CD8-positive, alpha-beta memory T cell (primary cell): ENCODE measurements at regions of chr6 and their contacts with region 1.

Region 1: GRCh38 chr6:44221291-44221960 is 2.0 kb upstream of the SLC29A1 start:
- DNase-seq: peak; percentile 62 to 84 (median 66)
- H3K4me3 ChIP-seq: no peak overlapping the region
- H3K4me3 Mint-ChIP-seq: peak overlapping the region in 4 of 7 donors; percentile 20 to 62 (median 38)
- H3K27ac ChIP-seq: peak overlapping the region; percentile 20
- H3K27ac Mint-ChIP-seq: peak overlapping the region in 5 of 8 donors; percentile 45 to 82 (median 71)
- H3K4me1 ChIP-seq: peaks cover 10% of the 10 kb centered on the region
- H3K4me1 Mint-ChIP-seq: peaks cover 16 to 27% (median 17%) of the 10 kb centered on the region in 3 donors
- H3K27me3 ChIP-seq: peaks cover 5% of the 10 kb centered on the region
- H3K27me3 Mint-ChIP-seq: peaks cover 10 to 11% of the 10 kb centered on the region in 2 donors

Region 2: DNA sequence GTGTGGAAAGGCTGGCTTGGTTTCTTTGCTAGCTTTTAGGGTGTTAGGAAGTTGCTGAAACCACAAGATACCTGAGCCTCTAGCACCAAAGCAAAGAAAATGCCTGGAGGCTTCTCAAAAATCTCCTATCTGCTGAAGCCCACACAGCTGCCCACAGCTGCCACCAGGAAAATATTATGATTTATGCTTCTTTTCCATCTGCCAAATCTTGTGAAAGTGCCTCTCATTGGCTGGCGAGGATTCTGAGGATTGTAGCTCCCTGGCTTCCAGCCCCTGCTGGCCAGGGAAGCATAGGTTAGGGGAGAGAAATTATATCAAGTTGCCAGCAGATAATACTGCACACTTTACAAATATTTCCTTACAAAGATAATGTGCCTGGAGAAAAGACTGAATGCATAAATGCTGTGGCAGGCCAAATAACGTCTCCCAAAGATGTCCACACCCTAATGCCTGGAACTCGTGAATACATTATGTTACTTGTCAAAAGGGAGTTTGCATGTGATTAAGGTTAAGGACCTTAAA is 192.6 kb before region 1 on chr6:
- CTCF ChIA-PET with region 1: no interaction called
- POLR2A ChIA-PET with region 1: no interaction called
- DNase-seq: no peak
- H3K4me3 ChIP-seq: no peak overlapping the region
- H3K4me3 Mint-ChIP-seq: no peak overlapping the region
- H3K27ac ChIP-seq: no peak overlapping the region
- H3K27ac Mint-ChIP-seq: no peak overlapping the region
- H3K4me1 ChIP-seq: no peaks in the 10 kb centered on the region
- H3K4me1 Mint-ChIP-seq: no peaks in the 10 kb centered on the region
- H3K27me3 ChIP-seq: no peaks in the 10 kb centered on the region
- H3K27me3 Mint-ChIP-seq: peaks cover 5 to 44% of the 10 kb centered on the region in 2 donors

Region 3: DNA sequence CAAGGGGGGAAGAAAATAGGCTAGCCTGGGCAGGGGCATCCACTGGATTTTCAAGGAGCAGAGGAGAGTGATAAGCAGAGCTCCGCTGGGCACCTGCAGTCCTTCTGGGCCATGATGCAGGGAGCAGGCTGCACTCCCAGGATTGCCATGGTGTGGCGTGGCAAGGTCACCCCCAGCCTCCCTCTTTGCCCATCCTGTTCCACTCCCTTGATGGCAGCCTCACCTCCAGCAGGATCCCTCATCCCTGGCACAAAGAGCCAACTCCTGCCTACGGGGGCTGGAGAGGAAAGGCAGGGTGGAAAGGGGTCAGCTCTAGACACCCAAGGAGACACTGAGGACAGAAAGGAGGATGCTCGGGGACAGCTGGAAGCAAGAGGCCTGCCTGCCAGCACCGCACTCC is 27.1 kb before region 1 on chr6:
- CTCF ChIA-PET with region 1: no interaction called
- POLR2A ChIA-PET with region 1: no interaction called
- DNase-seq: no peak
- H3K4me3 ChIP-seq: no peak overlapping the region
- H3K4me3 Mint-ChIP-seq: no peak overlapping the region
- H3K27ac ChIP-seq: no peak overlapping the region
- H3K27ac Mint-ChIP-seq: no peak overlapping the region
- H3K4me1 ChIP-seq: no peaks in the 10 kb centered on the region
- H3K4me1 Mint-ChIP-seq: no peaks in the 10 kb centered on the region
- H3K27me3 ChIP-seq: no peaks in the 10 kb centered on the region
- H3K27me3 Mint-ChIP-seq: peaks cover 13 to 23% of the 10 kb centered on the region in 2 donors

Region 4: DNA sequence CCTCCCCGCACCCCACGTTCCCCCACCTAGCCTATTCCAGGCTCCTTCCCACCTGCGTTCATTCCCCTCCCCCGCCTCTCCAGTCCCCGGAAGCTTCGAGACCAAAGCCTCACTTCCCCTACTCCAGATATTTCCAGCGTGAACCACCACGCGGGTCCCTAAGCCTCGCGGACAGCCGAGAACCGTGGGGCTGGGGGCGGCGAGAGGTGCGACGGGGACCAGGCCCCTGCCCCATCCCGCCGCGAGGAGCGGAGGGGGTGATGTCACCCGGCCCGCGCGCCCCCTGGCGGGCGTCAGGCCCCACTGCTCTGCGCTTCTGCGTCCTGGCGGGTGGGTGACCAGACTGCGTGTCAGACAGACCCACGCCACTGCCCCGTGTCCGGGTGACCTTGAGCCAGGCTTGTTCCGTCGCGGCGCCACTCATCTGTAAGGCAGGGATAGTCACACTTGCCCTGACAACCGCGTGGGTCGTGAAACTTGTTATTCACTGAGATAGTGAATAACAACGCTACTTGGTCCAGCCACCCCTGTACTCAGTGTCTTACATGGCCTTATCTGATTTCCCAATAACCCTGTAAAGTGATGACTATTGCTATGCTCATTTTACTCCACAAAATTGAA is 16.5 kb after region 1 on chr6:
- CTCF ChIA-PET with region 1: interaction called, 69 read pairs
- POLR2A ChIA-PET with region 1: interaction called, 3 read pairs
- DNase-seq: peak; percentile 70 to 85 (median 76)
- H3K4me3 ChIP-seq: peak overlapping the region; percentile 77
- H3K4me3 Mint-ChIP-seq: peak overlapping the region; percentile 84 to 95 (median 89)
- H3K27ac ChIP-seq: peak overlapping the region; percentile 87
- H3K27ac Mint-ChIP-seq: peak overlapping the region; percentile 63 to 98 (median 96)
- H3K4me1 ChIP-seq: peaks cover 12% of the 10 kb centered on the region
- H3K4me1 Mint-ChIP-seq: peaks cover 10 to 15% (median 10%) of the 10 kb centered on the region in 3 donors
- H3K27me3 ChIP-seq: no peaks in the 10 kb centered on the region
- H3K27me3 Mint-ChIP-seq: peaks cover 0 to 2% of the 10 kb centered on the region in 2 donors

Region 5: DNA sequence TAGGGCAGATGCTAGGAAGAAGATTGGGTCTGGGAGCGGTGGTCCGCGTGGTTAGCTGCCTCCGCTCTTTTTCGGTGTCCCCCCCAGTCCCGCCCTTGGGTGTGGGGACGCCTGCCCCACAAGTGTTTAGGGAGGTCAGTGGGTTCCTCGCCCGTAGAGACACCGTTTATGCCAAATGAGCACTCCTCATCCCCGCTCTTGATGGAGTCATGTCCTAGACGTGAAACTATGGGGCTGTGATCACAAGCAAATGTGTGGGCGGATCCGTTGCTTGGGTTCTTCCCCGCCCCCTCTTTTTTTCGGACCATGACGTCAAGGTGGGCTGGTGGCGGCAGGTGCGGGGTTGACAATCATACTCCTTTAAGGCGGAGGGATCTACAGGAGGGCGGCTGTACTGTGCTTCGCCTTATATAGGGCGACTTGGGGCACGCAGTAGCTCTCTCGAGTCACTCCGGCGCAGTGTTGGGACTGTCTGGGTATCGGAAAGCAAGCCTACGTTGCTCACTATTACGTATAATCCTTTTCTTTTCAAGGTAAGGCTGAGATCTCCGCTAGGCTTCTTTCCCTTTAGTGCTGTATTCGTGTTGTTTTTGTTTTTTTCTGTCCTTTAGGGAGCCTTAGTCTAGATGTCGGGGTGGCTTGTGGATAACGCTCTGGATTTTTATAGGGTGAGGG is 25.4 kb after region 1 on chr6 and contains the start of gene HSP90AB1:
- CTCF ChIA-PET with region 1: interaction called, 9 read pairs
- POLR2A ChIA-PET with region 1: interaction called, 24 read pairs
- DNase-seq: peak; percentile 87 to 98 (median 95)
- H3K4me3 ChIP-seq: peak within 1 kb of the TSS; percentile 98
- H3K4me3 Mint-ChIP-seq: peak within 1 kb of the TSS; percentile 91 to 99 (median 98)
- H3K27ac ChIP-seq: peak within 1 kb of the TSS; percentile 98
- H3K27ac Mint-ChIP-seq: peak within 1 kb of the TSS; percentile 91 to 99 (median 98)
- H3K4me1 ChIP-seq: peaks cover 23% of the 10 kb centered on the region
- H3K4me1 Mint-ChIP-seq: peaks cover 37 to 51% (median 47%) of the 10 kb centered on the region in 3 donors
- H3K27me3 ChIP-seq: no peaks in the 10 kb centered on the region
- H3K27me3 Mint-ChIP-seq: peaks cover 0 to 7% of the 10 kb centered on the region in 2 donors
- total RNA-seq, gene HSP90AB1: 2,387 to 2,400 TPM

Region 6: GRCh38 chr6:44257025-44257752 is 35.8 kb after region 1 on chr6 and contains the start of gene SLC35B2:
- CTCF ChIA-PET with region 1: interaction called, 22 read pairs
- POLR2A ChIA-PET with region 1: interaction called, 3 read pairs
- DNase-seq: peak; percentile 58 to 77 (median 72)
- H3K4me3 ChIP-seq: peak within 1 kb of the TSS; percentile 84
- H3K4me3 Mint-ChIP-seq: peak within 1 kb of the TSS; percentile 88 to 92 (median 91)
- H3K27ac ChIP-seq: peak within 1 kb of the TSS; percentile 81
- H3K27ac Mint-ChIP-seq: peak within 1 kb of the TSS; percentile 92 to 99 (median 95)
- H3K4me1 ChIP-seq: peaks cover 25% of the 10 kb centered on the region
- H3K4me1 Mint-ChIP-seq: peaks cover 51 to 71% (median 61%) of the 10 kb centered on the region in 3 donors
- H3K27me3 ChIP-seq: no peaks in the 10 kb centered on the region
- H3K27me3 Mint-ChIP-seq: peaks cover 0 to 3% of the 10 kb centered on the region in 2 donors
- total RNA-seq, gene SLC35B2: 34.8 to 35.7 TPM

Region 7: DNA sequence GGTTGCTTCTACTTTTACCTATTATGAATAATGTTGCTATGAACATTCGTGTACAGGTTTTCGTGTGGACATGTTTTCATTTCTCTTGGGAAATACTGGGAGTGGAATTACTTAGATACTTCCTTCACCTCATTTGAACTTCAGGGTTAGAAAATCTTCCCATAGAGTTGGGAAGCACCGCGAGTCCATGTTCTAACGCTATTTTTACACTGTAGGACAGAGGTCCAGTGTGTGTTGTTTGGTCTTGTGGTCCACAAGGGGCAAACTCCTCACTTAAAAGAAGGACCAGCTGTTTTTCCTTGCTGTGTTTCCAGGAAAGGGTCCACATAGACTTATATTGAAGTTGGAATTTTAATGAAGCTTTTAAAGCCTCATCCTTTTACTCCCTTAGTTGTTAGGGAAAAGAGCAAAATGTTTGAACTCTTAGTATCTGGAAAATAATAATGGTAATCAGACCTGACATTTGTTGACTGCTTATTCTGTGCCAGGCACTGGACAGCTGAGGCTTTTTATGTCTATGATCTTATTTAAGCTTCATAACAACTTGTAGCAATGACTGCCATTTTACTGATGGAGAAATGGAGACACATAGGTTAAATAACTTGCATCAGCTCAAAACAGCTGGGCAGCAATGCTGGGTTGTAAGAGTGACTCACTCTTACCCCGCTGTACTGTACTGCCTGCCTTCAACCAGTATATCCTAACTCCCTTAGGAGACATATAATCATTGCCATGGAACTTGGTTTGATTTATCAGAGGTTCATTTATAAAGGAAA is 218.0 kb after region 1 on chr6:
- CTCF ChIA-PET with region 1: no interaction called
- POLR2A ChIA-PET with region 1: no interaction called
- DNase-seq: no peak
- H3K4me3 ChIP-seq: no peak overlapping the region
- H3K4me3 Mint-ChIP-seq: no peak overlapping the region
- H3K27ac ChIP-seq: no peak overlapping the region
- H3K27ac Mint-ChIP-seq: peak overlapping the region in 1 of 8 donors; percentile 19
- H3K4me1 ChIP-seq: no peaks in the 10 kb centered on the region
- H3K4me1 Mint-ChIP-seq: peaks cover 24 to 32% (median 30%) of the 10 kb centered on the region in 3 donors
- H3K27me3 ChIP-seq: no peaks in the 10 kb centered on the region
- H3K27me3 Mint-ChIP-seq: no peaks in the 10 kb centered on the region